SK-N-SH (cell line): ENCODE measurements at regions of chr11 and their contacts with region 1.

Region 1: GRCh38 chr11:118051611-118052461 is 25.0 kb upstream of the TMPRSS4 start:
- DNase-seq: no peak
- H3K4me3 ChIP-seq: no peak overlapping the region
- H3K27ac ChIP-seq: no peak overlapping the region
- H3K4me1 ChIP-seq: no peaks in the 10 kb centered on the region
- H3K27me3 ChIP-seq: peaks cover 8% of the 10 kb centered on the region; the same call in 1 of the 2 replicates
- CTCF ChIP-seq: no peak
- EP300 ChIP-seq: no peak
- RAD21 ChIP-seq: no peak

Region 2: GRCh38 chr11:117547195-117547850 is 504.5 kb before region 1 on chr11:
- CTCF ChIA-PET with region 1: no interaction called
- POLR2A ChIA-PET with region 1: no interaction called
- DNase-seq: no peak
- H3K4me3 ChIP-seq: no peak overlapping the region
- H3K27ac ChIP-seq: no peak overlapping the region
- H3K4me1 ChIP-seq: no peaks in the 10 kb centered on the region; a peak in 1 of 4 replicates
- H3K27me3 ChIP-seq: 0 out of 2 replicates have a peak, but pooled peaks cover 5% of the 10 kb centered on the region
- CTCF ChIP-seq: no peak
- EP300 ChIP-seq: no peak
- RAD21 ChIP-seq: no peak

Region 3: DNA sequence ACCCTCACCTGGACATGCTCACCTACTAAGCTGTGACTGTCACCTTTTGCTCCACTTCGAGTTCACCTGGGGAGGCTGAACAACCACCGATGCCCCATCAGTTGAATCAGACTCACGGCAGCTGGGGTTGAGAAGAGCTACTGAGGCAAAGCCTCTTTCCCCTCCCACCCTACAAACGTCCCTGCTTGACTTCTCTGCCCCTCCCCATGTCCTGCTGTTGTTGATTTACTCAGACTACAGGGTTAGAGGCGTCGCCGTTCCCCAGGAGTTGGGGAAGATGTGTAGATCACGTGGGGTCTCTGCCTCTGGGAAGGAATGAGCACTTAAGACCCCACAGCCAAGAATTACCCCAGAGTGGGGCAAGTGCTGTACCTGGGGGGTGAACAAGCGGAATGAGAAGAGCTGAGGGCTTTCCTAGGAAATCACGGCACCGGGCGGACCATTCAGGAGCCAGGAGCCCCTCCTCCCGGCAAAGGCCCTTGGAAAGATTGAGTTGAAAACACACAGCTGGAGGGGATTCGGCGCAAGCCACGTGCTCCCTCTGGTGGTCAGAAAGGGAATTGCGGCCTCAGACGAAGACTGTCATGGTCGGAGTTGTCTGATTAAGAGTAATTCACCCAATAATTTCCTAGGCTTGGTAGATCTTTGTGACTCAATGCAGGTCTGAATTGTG is 234.3 kb before region 1 on chr11:
- CTCF ChIA-PET with region 1: interaction called, 74 read pairs
- POLR2A ChIA-PET with region 1: no interaction called
- DNase-seq: peak; percentile 83
- H3K4me3 ChIP-seq: peak overlapping the region in 1 of 2 experiments; percentile 33; a peak in 1 of 4 replicates
- H3K27ac ChIP-seq: no peak overlapping the region
- H3K4me1 ChIP-seq: peaks cover 8 to 28% of the 10 kb centered on the region in 2 experiments; a peak in 2 of 4 replicates
- H3K27me3 ChIP-seq: no peaks in the 10 kb centered on the region
- CTCF ChIP-seq: peak; percentile 98
- EP300 ChIP-seq: no peak
- RAD21 ChIP-seq: peak; percentile 92

Region 4: DNA sequence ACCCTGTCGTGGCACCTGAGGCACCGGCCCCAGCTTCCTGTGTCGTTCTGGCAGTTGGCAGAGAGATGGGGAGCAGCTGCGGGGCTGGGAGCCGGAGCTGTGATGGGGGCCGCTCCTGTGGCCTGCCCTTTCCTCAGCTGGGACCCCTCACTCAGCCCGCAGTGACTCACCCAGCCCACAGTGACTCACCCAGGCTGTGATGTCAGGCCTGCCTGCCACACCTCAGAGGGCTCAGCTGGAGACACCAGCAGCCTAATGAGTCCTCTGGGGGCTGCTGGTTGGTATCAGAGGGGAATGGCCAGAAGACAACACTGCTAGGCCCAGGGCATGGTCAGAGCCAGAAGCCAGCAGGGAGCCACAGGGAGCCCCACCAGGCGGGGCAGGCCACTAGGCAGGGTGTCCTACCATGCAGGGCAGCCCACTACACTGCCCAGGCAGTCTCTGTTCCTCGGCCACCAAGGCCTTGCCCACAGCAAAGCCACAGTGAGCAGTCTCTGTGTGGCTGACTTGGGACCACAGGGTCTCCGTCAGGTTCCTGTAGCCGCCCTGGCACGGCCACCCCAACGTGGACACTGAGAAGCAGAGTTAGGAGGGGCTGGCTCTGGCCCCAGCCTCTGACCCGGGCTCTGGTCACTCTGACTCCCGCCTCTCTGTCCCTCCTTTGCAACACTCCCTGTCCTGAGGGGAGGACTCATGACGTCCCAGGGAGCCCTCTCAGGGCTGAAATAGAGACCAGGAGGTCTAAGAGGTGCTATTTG is 223.0 kb before region 1 on chr11:
- CTCF ChIA-PET with region 1: interaction called, 23 read pairs
- POLR2A ChIA-PET with region 1: no interaction called
- DNase-seq: no peak
- H3K4me3 ChIP-seq: no peak overlapping the region
- H3K27ac ChIP-seq: no peak overlapping the region
- H3K4me1 ChIP-seq: peaks cover 0 to 6% of the 10 kb centered on the region in 2 experiments; a peak in 2 of 4 replicates
- H3K27me3 ChIP-seq: peaks cover 9% of the 10 kb centered on the region; the same call in 1 of the 2 replicates
- CTCF ChIP-seq: no peak
- EP300 ChIP-seq: no peak
- RAD21 ChIP-seq: no peak

Region 5: DNA sequence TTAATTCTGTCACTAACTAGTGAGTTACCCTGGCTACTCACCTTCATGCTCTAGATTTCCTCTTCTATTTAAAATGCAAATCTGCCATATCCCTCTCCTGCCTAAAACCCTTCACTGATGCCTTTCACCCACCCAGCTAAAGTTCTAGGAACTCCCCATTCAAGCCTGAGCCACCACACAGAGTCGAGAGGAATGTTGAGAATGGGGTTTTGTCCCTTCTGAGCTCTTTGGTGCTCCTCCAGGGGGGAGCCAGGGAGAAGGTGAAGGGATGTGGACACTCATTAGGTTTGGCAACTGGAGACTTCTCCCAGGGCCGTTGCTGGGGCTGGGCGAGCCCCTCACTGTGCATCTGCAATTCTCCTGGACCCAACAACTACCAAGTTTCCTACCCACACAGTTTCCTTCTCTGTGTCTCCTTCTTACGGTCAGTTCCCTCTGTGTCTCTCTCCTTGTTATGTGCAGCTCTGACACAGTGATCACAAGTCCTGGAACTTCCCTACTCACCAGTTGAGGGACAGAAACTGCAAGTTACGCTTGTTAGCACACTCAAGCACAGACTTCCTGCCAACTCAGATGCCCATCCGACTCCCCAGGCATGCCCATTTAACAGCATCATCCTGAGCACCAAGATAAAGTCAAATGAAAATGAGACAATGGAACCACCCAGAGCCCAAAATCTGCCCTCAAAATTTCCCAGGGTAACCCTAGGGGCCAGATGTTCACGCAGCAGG is 72.2 kb before region 1 on chr11:
- CTCF ChIA-PET with region 1: interaction called, 11 read pairs
- POLR2A ChIA-PET with region 1: no interaction called
- DNase-seq: no peak
- H3K4me3 ChIP-seq: no peak overlapping the region
- H3K27ac ChIP-seq: no peak overlapping the region
- H3K4me1 ChIP-seq: peaks cover 0 to 4% of the 10 kb centered on the region in 2 experiments; a peak in 1 of 4 replicates
- H3K27me3 ChIP-seq: peaks cover 5% of the 10 kb centered on the region; the same call in 1 of the 2 replicates
- CTCF ChIP-seq: no peak
- EP300 ChIP-seq: no peak
- RAD21 ChIP-seq: no peak

Region 6: DNA sequence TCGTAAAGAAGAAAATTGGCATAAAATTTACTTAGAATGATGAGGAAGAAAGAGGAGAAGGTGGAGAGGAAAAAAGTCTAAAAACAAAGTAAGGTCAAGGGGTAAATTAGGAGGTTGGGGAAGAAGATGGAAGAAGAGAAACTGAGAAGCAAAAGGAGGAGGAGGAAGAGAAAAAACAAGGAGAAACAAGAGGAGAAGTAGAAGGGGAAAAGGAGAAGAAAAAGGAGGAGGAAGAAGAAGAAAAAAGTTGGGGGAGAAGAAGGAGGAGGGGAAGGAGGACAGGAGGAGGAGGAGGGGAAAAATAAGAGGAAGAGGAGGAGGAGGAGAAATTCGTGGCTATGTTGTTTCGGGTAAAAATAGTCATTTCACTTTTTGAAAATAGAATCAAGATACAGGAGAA is 23.2 kb before region 1 on chr11:
- CTCF ChIA-PET with region 1: interaction called, 11 read pairs
- POLR2A ChIA-PET with region 1: no interaction called
- DNase-seq: no peak
- H3K4me3 ChIP-seq: no peak overlapping the region
- H3K27ac ChIP-seq: no peak overlapping the region
- H3K4me1 ChIP-seq: no peaks in the 10 kb centered on the region
- H3K27me3 ChIP-seq: peaks cover 9% of the 10 kb centered on the region; the same call in 1 of the 2 replicates
- CTCF ChIP-seq: no peak
- EP300 ChIP-seq: no peak
- RAD21 ChIP-seq: no peak

Region 7: DNA sequence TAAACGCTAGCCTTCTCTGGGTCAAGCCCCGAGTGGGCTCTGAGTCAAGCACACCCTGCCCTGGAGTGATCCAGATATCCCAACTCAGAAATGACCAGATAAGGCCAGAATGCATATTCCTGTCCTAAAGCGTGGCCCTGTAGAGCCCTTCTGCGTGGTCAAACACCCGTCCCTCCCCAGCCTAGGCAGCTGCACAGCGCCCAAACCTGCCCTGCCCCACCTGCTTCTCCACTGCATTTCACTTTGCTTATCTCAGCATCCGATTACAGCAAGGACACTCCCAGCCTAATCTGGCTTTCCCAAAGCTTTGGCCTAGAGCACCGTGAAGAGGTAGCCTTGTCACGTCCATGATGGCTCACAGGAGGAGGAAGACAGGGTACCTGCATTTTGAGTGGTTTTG is 13.1 kb after region 1 on chr11:
- CTCF ChIA-PET with region 1: interaction called, 24 read pairs
- POLR2A ChIA-PET with region 1: no interaction called
- DNase-seq: no peak
- H3K4me3 ChIP-seq: no peak overlapping the region
- H3K27ac ChIP-seq: no peak overlapping the region
- H3K4me1 ChIP-seq: no peaks in the 10 kb centered on the region
- H3K27me3 ChIP-seq: no peaks in the 10 kb centered on the region; the same call in 1 of the 2 replicates
- CTCF ChIP-seq: no peak
- EP300 ChIP-seq: no peak
- RAD21 ChIP-seq: no peak

Region 8: DNA sequence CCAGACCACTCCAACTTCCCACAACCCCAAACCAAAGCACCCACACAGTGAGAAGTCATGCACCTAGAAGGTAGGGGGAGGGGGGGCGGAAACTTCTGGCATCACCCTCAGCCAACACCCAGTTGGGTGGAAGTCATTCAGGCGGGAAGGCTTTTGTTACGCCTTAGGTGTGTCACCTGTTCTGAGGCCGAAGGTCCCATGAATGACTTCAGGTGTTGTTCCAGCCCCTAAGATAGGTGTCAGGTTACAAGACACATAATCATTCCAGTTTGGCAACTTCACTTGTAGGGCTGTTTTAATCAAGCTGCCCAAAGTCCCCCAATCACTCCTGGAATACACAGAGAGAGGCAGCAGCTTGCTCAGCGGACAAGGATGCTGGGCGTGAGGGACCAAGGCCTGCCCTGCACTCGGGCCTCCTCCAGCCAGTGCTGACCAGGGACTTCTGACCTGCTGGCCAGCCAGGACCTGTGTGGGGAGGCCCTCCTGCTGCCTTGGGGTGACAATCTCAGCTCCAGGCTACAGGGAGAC is 25.0 kb after region 1 on chr11 and contains the start of gene TMPRSS4:
- CTCF ChIA-PET with region 1: interaction called, 16 read pairs
- POLR2A ChIA-PET with region 1: no interaction called
- DNase-seq: no peak
- H3K4me3 ChIP-seq: no peak within 1 kb of the TSS
- H3K27ac ChIP-seq: no peak within 1 kb of the TSS
- H3K4me1 ChIP-seq: no peaks in the 10 kb centered on the region
- H3K27me3 ChIP-seq: peaks cover 19% of the 10 kb centered on the region; the same call in 1 of the 2 replicates
- CTCF ChIP-seq: no peak
- EP300 ChIP-seq: no peak
- RAD21 ChIP-seq: no peak
- polyA plus RNA-seq, gene TMPRSS4: not detected in 2 replicates

Region 9: GRCh38 chr11:118098996-118099837 is 47.4 kb after region 1 on chr11:
- CTCF ChIA-PET with region 1: no interaction called
- POLR2A ChIA-PET with region 1: no interaction called
- DNase-seq: no peak
- H3K4me3 ChIP-seq: no peak overlapping the region
- H3K27ac ChIP-seq: no peak overlapping the region
- H3K4me1 ChIP-seq: no peaks in the 10 kb centered on the region
- H3K27me3 ChIP-seq: peaks cover 3% of the 10 kb centered on the region; the same call in 1 of the 2 replicates
- CTCF ChIP-seq: no peak
- EP300 ChIP-seq: no peak
- RAD21 ChIP-seq: no peak

Region 10: DNA sequence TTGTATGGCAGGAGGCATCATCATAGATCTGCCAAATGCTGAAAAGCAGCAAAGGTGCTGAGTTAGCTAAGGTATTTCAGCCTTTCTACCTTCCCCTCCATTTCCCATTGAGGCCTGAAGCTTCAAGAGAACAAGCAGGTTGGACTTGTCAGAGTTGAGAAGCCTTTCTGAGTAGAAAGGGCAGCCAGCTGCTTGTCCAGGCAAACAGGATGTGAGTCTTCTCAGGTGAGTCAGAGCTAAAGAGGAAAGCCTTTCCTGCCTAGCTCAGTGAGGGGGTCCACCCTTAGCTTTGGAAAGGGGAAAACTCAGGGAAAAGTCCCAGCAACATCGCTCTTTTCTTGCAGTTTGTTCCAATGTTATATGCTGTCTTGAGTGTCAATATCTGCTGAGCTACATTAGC is 225.5 kb after region 1 on chr11:
- CTCF ChIA-PET with region 1: no interaction called
- POLR2A ChIA-PET with region 1: no interaction called
- DNase-seq: no peak
- H3K4me3 ChIP-seq: no peak overlapping the region
- H3K27ac ChIP-seq: no peak overlapping the region; a peak in 1 of 4 replicates
- H3K4me1 ChIP-seq: peaks cover 0 to 3% of the 10 kb centered on the region in 2 experiments; a peak in 1 of 4 replicates
- H3K27me3 ChIP-seq: no peaks in the 10 kb centered on the region
- CTCF ChIP-seq: no peak
- EP300 ChIP-seq: no peak
- RAD21 ChIP-seq: no peak